CD8-positive, alpha-beta T cell (primary cell): ENCODE measurements at regions of chr2 and their contacts with region 1.

Region 1: DNA sequence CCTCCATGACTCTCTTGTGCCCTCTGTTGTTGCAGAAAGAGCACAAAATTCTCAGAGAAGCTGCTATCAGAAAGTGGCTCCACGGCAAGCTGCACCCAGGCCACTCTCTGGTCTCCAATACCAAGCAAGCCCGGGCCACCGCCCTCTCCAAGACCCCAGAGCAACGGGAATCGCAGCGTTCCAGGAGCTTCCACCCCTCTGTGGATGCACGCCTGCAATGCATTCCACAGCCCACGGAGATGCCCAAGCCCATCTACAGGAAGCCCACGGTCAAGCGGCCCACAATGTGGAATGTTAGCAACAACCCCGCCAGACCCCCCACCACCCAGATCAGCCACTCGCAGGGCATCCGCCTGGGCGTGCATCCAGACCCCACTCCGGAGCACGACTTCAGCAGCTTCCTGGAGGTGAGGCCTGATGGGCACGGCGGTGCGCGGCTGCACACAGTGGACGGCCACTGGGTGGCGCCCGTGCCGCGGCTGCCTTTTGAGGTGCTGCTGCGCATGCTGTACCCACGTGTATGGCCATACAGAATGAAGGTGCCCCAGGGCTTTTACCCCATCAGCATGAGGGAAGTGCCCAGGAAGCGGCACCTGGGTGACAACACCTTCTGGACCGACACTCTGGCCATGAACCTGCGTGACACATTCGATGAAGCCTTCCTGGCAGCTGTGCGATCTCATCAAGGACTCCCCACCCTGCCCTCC is 6.3 kb downstream of the ANKRD53 start:
- DNase-seq: peak; percentile 67 to 88 (median 83)
- ATAC-seq: peak; percentile 100
- H3K4me3 ChIP-seq: no peak overlapping the region
- H3K4me3 Mint-ChIP-seq: peak overlapping the region; percentile 51
- H3K27ac ChIP-seq: no peak overlapping the region
- H3K27ac Mint-ChIP-seq: peak overlapping the region; percentile 6
- H3K4me1 ChIP-seq: peaks cover 11% of the 10 kb centered on the region
- H3K4me1 Mint-ChIP-seq: peaks cover 16% of the 10 kb centered on the region
- H3K27me3 ChIP-seq: no peaks in the 10 kb centered on the region
- H3K27me3 Mint-ChIP-seq: no peaks in the 10 kb centered on the region
- CTCF ChIP-seq: peak; percentile 84

Region 2: DNA sequence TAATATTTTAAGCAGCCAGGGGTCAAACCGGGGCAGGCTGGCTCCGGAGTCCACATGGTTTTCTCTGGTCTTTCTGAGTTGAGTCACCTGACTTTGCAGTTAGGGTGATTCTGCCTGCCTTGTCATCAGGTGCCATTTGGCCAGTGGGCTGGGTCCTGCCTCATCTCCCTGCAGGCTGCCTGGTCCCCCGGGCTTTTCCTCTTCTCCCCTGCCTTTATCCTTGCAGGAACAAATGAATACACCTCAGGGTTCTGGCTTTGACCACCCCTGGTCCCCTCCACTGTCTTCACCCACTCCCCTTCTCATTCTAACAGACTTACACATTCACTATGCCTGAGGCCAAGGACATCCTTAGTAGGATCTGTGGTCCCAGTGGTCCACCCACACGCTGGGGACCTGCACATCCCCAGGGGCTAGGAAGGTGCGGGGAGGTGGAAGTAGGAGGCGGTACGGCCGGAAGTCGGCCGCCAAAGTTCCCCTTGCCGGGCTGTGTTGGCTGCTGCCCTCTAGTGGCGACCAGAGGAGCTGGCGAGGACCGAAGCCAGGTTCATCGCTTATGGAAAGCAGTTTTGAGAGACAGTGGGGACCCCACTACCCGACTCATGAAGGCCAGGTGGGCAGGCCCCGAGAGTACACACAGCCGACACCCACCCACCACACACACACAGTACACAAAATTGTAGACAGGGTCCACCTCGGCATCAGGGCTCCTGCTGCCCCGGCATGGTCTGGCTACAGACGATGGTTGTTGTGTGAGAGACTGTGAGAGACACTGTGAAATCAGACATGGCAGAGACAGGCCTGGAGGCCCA is 16.3 kb after region 1 on chr2:
- CTCF ChIA-PET with region 1: interaction called, 32 read pairs
- POLR2A ChIA-PET with region 1: interaction called, 4 read pairs
- intact Hi-C with region 1: loop called (anchors 1 to 2 kb)
- DNase-seq: peak; percentile 58 to 89 (median 81)
- ATAC-seq: peak; percentile 99
- H3K4me3 ChIP-seq: peak overlapping the region; percentile 39 to 44
- H3K4me3 Mint-ChIP-seq: peak overlapping the region; percentile 49
- H3K27ac ChIP-seq: peak overlapping the region in 1 of 2 experiments; percentile 48
- H3K27ac Mint-ChIP-seq: no peak overlapping the region
- H3K4me1 ChIP-seq: peaks cover 11% of the 10 kb centered on the region
- H3K4me1 Mint-ChIP-seq: peaks cover 12% of the 10 kb centered on the region
- H3K27me3 ChIP-seq: no peaks in the 10 kb centered on the region
- H3K27me3 Mint-ChIP-seq: peaks cover 5% of the 10 kb centered on the region
- CTCF ChIP-seq: peak; percentile 80

Region 3: DNA sequence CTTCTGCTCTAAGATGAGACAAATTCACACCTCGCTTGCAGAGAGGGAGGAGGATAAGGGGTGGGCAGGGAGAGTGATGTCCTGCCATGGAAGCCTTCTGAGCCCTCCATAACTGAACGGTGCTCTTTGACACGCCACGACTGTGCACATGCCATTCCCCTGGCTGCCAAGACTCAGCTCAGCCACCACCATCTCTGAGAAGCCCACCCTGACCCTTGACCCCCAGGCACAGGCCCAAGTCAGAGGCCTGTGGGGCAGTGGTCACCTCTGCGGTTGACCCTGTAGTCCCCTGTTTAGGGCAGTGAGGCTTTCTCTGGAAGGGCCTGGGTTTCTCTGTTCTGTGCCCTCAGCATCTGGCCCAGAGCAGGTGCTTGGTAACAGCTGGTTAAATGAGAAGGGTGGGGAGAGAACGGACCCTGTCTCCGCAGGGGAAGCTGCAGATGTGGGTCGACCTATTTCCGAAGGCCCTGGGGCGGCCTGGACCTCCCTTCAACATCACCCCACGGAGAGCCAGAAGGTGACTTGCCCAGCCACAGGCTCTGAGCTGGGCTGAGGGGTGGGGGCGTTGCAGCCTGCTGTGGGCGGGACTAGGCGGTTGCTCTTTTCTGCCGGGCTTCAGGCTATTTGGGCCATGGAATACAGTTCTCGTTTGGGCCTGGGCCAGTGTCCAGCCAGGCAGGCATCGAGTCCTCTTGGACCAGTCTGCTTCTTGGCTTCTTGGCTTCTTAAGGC is 683.8 kb after region 1 on chr2:
- CTCF ChIA-PET with region 1: no interaction called
- POLR2A ChIA-PET with region 1: no interaction called
- intact Hi-C with region 1: no loop called
- DNase-seq: peak in 1 of 9 experiments; percentile 4
- ATAC-seq: no peak
- H3K4me3 ChIP-seq: no peak overlapping the region
- H3K4me3 Mint-ChIP-seq: no peak overlapping the region
- H3K27ac ChIP-seq: no peak overlapping the region
- H3K27ac Mint-ChIP-seq: no peak overlapping the region
- H3K4me1 ChIP-seq: no peaks in the 10 kb centered on the region
- H3K4me1 Mint-ChIP-seq: no peaks in the 10 kb centered on the region
- H3K27me3 ChIP-seq: no peaks in the 10 kb centered on the region
- H3K27me3 Mint-ChIP-seq: peaks cover 11% of the 10 kb centered on the region
- CTCF ChIP-seq: no peak